ENCODE measurements at regions of chr11 and their contacts with region 1.

Region 1: GRCh38 chr11:45102810-45103621 is 43.4 kb upstream of the PRDM11 start:
- DNase-seq: peak; percentile 84

Region 2: DNA sequence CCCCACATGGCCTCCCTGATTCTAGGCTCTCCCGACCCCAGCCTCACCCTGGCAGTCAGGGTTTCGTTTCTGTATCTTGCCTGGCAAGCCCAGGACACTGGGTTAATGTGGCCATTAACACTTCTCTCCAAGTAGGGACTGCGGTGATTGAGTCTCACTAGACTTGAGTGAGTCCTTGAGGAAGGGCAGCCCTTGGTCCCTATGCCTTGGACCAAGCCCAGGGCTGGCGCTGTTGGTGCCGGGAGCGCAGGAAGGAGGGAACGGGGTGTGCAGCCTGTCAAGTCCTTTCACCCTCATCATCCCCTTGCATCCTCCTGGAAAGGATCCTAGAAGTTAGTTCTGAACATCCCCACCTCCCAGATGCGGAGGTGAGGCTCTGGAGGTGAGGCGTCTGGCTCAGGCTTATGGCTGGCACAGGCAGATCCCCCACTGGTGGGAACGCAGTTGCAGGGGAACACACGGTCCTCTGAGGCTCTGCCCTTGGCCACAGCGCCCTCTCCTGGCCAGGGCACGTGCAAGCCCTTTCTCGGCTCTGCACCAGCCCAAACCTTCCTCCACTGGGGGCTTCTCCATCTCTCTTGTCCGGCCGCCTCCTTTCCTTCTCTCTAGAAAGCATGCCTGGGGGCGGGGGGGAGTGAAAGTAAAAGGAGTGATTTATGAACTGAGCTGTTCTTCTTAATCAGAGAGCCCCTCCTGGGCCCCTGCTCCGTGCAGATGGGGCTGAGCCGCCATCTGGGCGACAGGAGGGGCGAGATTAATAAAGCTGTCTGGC is 209.0 kb before region 1 on chr11:
- in situ Hi-C with region 1: no loop called
- DNase-seq: peak; percentile 79

Region 3: DNA sequence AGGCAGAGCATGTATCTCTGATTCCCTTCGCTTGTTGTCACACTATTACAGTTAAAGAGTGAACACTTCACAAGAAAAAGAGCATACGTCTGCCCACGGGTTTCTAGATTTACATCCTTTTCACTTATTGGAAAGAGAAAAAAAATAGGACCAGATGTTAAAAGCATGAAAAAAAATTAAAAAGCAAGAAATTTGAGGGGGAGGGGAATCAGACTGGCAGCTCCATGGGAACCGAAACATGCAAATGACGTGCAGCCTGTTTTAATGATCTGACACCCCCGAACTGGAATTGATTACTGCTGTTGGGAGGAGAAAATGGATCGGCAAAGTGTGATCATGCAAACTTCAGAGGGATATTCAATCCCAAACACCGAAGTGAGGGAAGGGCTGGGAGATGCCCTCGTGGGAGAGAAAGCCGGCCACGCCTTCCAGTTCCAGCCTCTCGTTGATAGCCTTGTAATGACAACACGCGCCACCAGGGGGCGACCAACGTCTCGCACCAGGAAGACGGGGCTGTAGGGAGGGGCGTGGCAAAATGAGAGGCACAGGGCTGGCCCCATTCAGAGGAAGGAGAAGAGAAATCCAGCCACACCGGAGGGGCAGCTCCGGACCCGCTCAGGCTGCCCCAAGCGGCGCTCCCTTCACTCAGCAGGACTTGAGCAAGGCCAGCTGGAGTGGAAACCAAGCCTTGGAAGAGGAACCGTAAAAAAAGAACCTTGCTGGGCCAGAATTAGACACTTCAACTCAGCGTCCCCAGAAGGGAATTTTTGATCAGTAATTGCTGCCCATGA is 236.9 kb after region 1 on chr11:
- in situ Hi-C with region 1: loop called (anchors 25 kb)
- DNase-seq: peak; percentile 85

Measured in G401 (cell line).